Caki2 (cell line): ENCODE measurements at regions of chr13 and their contacts with region 1.

Region 1: GRCh38 chr13:100514788-100515409 is 73.7 kb downstream of the GGACT start:
- DNase-seq: peak; percentile 55

Region 2: DNA sequence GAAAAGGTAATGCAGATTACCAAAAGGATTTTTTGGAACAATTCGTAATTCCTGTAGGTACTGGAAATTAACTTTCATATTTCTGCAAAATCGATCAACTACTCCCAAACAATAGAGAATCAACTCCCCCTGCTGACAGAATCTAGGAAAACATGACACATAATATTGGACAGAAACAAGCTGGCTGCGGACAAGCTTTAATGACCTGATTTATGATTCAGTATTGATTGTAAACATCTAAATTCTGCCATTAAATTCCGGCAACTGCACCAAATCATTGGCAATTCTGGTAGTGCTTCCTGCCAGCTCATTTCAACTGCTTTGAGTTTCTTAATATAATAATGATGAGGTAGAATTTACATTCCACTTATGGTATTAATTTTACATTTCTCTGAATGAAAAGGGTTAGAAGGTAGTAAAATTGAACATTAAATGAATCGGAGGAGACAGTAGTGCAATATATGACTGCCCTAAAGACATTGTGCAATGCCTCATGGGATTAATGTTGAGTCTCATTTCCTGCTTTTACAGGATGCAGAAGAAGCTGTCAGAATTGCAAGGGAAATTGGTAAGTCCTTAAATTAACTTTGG is 279.5 kb before region 1 on chr13:
- in situ Hi-C with region 1: loop called (anchors 25 kb)
- DNase-seq: peak; percentile 53

Region 3: DNA sequence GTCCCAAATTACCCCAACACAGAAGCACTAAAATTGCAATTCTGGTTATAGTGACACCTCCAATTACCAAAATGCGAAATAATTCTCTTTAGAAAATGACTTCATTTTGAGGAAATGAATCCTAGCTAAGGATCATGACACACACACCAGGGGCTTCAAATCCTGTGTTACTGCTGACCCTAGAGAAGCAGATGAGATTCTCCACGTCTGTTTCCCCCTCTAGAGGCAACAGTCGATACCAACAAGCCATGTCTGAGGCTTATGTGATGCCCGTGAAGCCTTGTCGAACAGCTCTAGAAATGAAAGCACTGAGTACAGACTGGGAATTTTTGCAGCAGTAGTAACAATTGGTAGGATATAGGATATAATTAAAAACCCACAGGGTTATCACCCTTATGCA is 313.3 kb after region 1 on chr13:
- in situ Hi-C with region 1: no loop called
- DNase-seq: no peak